Dendritic cell treated with granulocyte-macrophage colony-stimulating factor and Interleukin-4, amounts not matched to agents 40 ng/mL and 50 ng/mL, for 4 days (primary cell): ENCODE measurements at regions of chr16 and their contacts with region 1.

Region 1: GRCh38 chr16:46689365-46690280 is at the start of gene ORC6:
- H3K4me3 Mint-ChIP-seq: no peak within 1 kb of the TSS
- H3K27ac Mint-ChIP-seq: no peak within 1 kb of the TSS
- H3K4me1 Mint-ChIP-seq: peaks cover 30% of the 10 kb centered on the region
- H3K27me3 Mint-ChIP-seq: no peaks in the 10 kb centered on the region

Region 2: DNA sequence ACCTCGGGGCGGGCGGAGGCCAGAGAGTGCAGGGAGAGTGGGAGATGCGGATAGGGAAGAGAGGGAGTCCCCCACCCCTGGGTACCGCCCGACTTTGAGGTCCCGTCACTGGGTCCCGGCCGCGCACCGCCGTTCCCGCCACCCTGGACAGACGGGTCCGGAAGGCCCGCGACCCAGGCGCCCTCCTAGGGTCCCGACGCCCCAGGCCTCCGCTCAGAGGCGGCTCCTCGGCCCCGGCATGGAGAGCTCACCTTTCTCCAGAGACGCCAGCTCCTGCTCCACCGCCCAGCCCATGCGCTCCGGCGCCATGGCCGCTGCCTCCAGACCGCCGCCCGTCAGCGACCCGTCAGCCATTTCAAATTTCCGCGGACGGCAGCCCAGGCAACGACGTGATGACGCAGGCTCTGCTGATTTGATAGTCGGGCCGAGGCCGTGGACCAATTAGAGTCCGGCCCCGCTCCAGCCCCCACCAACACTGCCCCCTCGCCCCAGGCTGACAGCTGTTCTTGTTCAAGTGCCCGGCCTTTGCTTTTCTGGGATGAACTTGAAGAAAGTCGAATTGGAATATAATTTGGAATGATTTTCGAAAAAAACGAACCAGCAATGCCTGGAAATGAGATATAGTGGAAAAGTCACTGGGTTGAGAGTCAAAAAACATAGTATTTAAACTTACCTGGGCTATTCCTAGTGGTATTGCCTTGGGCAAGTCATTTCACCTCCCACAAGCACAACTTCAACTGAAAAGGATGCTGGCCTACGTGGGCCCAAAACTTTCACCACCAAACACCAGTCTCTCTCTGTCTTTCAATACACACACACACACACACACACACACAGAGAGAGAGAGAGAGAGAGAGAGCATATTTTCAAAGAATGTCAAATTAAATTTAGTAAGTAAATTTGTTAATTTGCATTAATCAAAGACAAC is 68.4 kb before region 1 on chr16 and contains the start of gene SHCBP1:
- intact Hi-C with region 1: loop called (anchors 2 kb)
- H3K4me3 Mint-ChIP-seq: peak within 1 kb of the TSS; percentile 95
- H3K27ac Mint-ChIP-seq: peak within 1 kb of the TSS; percentile 88
- H3K4me1 Mint-ChIP-seq: peaks cover 26% of the 10 kb centered on the region
- H3K27me3 Mint-ChIP-seq: no peaks in the 10 kb centered on the region

Region 3: GRCh38 chr16:46638947-46639925 is 50.4 kb before region 1 on chr16:
- intact Hi-C with region 1: no loop called
- H3K4me3 Mint-ChIP-seq: no peak overlapping the region
- H3K27ac Mint-ChIP-seq: peak overlapping the region; percentile 21
- H3K4me1 Mint-ChIP-seq: peaks cover 35% of the 10 kb centered on the region
- H3K27me3 Mint-ChIP-seq: no peaks in the 10 kb centered on the region

Region 4: DNA sequence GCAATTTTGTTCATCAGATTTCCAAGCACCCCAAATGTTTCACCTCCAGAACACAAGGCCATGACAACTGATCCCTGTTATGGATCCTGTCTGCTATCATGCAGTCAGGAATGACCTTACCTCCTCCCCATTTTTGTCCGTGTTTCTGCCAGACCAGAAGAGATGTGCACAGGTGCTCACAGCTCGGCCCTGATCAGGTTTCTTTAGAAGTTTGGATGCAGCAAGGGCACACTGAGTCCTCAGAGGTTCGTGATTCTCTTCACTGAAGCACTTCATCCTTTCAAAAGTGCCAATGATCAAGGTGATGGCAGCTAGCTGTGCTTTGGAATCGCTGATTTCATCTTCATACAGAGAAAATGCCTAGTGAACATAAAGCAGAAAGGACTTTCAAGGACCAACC is 27.5 kb before region 1 on chr16:
- intact Hi-C with region 1: no loop called
- H3K4me3 Mint-ChIP-seq: no peak overlapping the region
- H3K27ac Mint-ChIP-seq: no peak overlapping the region
- H3K4me1 Mint-ChIP-seq: peaks cover 23% of the 10 kb centered on the region
- H3K27me3 Mint-ChIP-seq: no peaks in the 10 kb centered on the region

Region 5: DNA sequence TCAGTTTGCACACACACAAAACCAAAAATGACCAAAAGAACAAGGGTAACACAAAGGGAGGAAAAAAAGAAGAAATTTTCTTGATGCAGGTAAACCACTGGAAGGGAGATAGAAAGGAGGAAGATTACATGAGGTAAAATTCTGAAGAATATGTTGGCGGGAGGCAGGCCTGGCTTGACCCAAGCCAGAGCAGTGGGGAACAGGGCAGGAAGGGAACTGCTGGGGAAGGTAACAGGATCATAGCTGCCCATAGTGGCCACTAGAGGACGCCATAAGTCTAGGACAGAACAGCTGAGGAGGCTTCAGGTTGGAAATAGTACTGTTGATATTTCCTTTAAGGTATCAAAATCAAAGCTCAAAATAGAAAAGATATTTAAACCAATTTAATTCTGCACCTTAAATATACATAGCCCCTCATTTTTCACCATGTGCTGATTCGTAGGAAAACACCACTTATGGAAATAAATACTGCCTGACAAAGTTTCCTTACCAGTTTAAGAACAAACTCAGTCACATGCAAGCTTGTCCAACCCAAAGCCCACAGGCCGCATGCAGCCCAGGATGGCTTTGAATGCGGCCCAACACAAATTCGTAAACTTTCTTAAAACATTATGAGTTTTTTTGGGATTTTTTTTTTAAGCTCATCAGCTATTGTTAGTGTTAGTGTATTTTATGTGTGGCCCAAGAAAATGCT is 16.2 kb before region 1 on chr16:
- intact Hi-C with region 1: loop called (anchors 2 kb)
- H3K4me3 Mint-ChIP-seq: no peak overlapping the region
- H3K27ac Mint-ChIP-seq: no peak overlapping the region
- H3K4me1 Mint-ChIP-seq: peaks cover 8% of the 10 kb centered on the region
- H3K27me3 Mint-ChIP-seq: no peaks in the 10 kb centered on the region

Region 6: GRCh38 chr16:46711106-46712058 is 21.8 kb after region 1 on chr16:
- intact Hi-C with region 1: no loop called
- H3K4me3 Mint-ChIP-seq: no peak overlapping the region
- H3K27ac Mint-ChIP-seq: peak overlapping the region; percentile 72
- H3K4me1 Mint-ChIP-seq: peaks cover 59% of the 10 kb centered on the region
- H3K27me3 Mint-ChIP-seq: no peaks in the 10 kb centered on the region

Region 7: GRCh38 chr16:46743238-46743719 is 53.7 kb after region 1 on chr16:
- intact Hi-C with region 1: loop called (anchors 1 kb)
- H3K4me3 Mint-ChIP-seq: peak overlapping the region; percentile 27
- H3K27ac Mint-ChIP-seq: peak overlapping the region; percentile 97
- H3K4me1 Mint-ChIP-seq: peaks cover 25% of the 10 kb centered on the region
- H3K27me3 Mint-ChIP-seq: no peaks in the 10 kb centered on the region

Region 8: GRCh38 chr16:46789499-46790414 is 100.1 kb after region 1 on chr16:
- intact Hi-C with region 1: loop called (anchors 1 kb)
- H3K4me3 Mint-ChIP-seq: peak overlapping the region; percentile 80
- H3K27ac Mint-ChIP-seq: peak overlapping the region; percentile 93
- H3K4me1 Mint-ChIP-seq: peaks cover 41% of the 10 kb centered on the region
- H3K27me3 Mint-ChIP-seq: no peaks in the 10 kb centered on the region

Region 9: DNA sequence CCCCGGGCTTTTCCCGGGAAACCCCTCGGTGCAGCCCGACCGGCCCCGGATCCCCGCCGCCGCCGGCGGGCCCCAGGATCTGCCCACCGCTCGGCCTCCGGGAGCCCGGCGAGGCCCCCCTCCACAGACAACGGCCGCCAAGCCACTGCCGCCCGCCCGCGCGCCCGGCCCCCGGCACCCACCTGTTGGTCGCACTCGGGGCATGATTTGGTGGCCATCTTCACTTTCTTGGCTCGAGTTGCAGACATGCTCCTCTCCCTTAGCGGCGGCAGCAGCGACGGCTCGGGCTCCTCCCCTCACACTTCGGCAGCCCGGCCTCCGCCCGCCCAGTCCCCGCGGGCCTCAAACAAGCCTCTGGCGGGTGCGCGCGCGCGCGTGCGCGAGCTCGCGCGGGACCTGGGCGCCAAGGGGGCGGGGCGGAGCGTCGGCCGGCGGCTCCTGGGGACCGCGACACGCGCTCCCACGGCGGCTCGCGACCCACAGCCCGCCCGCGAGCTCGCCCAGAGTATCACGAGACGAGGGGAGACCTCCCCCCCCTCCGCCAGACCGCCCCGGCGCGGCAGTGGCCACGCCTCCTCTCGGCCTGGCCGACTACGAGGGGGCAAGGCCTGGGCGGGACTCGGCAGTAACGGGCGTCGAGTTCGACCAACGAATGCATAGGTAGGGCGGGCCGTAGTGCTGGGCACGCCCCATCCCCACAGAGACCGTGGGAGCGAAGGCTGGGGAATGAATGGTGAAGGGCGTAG is 141.5 kb after region 1 on chr16 and contains the start of gene C16orf87:
- intact Hi-C with region 1: loop called (anchors 2 kb)
- H3K4me3 Mint-ChIP-seq: peak within 1 kb of the TSS; percentile 82
- H3K27ac Mint-ChIP-seq: peak within 1 kb of the TSS; percentile 88
- H3K4me1 Mint-ChIP-seq: peaks cover 19% of the 10 kb centered on the region
- H3K27me3 Mint-ChIP-seq: no peaks in the 10 kb centered on the region